ENCODE measurements at regions of chr12 and their contacts with region 1.

Region 1: DNA sequence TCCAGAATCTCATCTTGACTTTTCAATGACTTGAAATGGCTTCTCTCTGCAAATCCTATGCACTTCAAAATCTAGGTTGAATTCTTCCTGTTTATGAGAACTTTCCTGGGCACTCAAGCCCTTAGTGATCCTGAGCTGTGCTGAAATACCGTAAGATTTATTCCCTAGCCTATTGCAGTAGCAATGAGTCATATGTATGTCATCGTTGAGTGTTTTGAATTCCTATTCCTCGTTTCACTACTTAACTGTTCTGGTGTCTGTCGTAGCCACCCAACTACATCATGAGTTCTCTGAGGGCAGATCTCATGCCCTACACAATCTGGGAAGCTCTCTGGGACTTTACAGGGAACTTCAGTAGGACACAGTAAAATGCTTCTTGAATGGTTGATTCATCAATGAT is 190.8 kb upstream of the TMEM132C start:
- DNase-seq: no peak
- H3K4me3 ChIP-seq: no peak overlapping the region
- H3K27ac ChIP-seq: no peak overlapping the region
- H3K4me1 ChIP-seq: no peaks in the 10 kb centered on the region
- H3K27me3 ChIP-seq: no peaks in the 10 kb centered on the region
- CTCF ChIP-seq: no peak
- EP300 ChIP-seq: no peak
- POLR2A ChIP-seq: no peak

Region 2: GRCh38 chr12:126534495-126534894 is 1541.7 kb before region 1 on chr12:
- in situ Hi-C with region 1: no loop called
- intact Hi-C with region 1: loop called (anchors 10 kb)
- DNase-seq: no peak
- H3K4me3 ChIP-seq: no peak overlapping the region
- H3K27ac ChIP-seq: no peak overlapping the region
- H3K4me1 ChIP-seq: no peaks in the 10 kb centered on the region
- H3K27me3 ChIP-seq: no peaks in the 10 kb centered on the region
- CTCF ChIP-seq: no peak
- EP300 ChIP-seq: no peak
- POLR2A ChIP-seq: no peak